ENCODE measurements at regions of chr12 and their contacts with region 1.

Region 1: GRCh38 chr12:92987362-92987761 is 58.3 kb upstream of the EEA1 start:
- DNase-seq: peak; percentile 77
- H3K4me3 Mint-ChIP-seq: no peak overlapping the region
- H3K27ac Mint-ChIP-seq: no peak overlapping the region
- H3K4me1 Mint-ChIP-seq: peaks cover 5% of the 10 kb centered on the region
- H3K27me3 Mint-ChIP-seq: no peaks in the 10 kb centered on the region
- CTCF ChIP-seq: peak; percentile 61

Region 2: DNA sequence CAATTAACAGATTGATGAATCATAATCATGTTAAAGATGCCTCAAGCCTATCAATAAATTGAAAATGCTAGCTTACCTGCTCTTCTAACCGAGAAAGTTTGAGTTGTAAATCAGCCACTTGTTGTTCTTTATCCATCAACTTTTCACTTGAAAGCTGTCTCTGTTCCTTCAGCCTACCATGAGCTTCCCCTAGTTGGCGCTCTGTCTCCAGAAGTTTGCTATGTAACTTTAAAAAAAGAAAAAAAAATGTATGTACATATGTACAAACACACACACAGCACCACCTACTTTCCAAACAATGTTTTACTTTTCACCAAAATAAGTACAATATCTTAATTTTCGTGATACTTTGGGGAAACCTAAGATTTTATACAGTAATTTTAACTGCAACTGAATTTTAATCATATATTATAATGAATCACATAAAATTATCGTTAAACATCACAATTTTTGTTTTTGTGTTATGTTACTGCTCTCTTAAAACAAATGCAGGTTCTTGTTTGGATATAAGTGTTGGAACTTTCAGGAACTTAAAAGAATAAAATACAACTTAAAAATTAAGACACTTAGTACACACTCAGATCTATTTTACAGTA is 159.4 kb before region 1 on chr12:
- CTCF ChIA-PET with region 1: interaction called, 16 read pairs
- POLR2A ChIA-PET with region 1: interaction called, 3 read pairs
- intact Hi-C with region 1: loop called (anchors 5 kb)
- DNase-seq: peak; percentile 69
- H3K4me3 Mint-ChIP-seq: no peak overlapping the region
- H3K27ac Mint-ChIP-seq: no peak overlapping the region
- H3K4me1 Mint-ChIP-seq: no peaks in the 10 kb centered on the region
- H3K27me3 Mint-ChIP-seq: no peaks in the 10 kb centered on the region
- CTCF ChIP-seq: peak; percentile 78

Region 3: GRCh38 chr12:92844151-92844763 is 143.1 kb before region 1 on chr12:
- CTCF ChIA-PET with region 1: no interaction called
- POLR2A ChIA-PET with region 1: no interaction called
- intact Hi-C with region 1: no loop called
- DNase-seq: no peak
- H3K4me3 Mint-ChIP-seq: no peak overlapping the region
- H3K27ac Mint-ChIP-seq: no peak overlapping the region
- H3K4me1 Mint-ChIP-seq: no peaks in the 10 kb centered on the region
- H3K27me3 Mint-ChIP-seq: no peaks in the 10 kb centered on the region
- CTCF ChIP-seq: no peak

Region 4: GRCh38 chr12:93002293-93003054 is 15.1 kb after region 1 on chr12:
- CTCF ChIA-PET with region 1: interaction called, 32 read pairs
- POLR2A ChIA-PET with region 1: interaction called, 4 read pairs
- intact Hi-C with region 1: no loop called
- DNase-seq: peak; percentile 52
- H3K4me3 Mint-ChIP-seq: no peak overlapping the region
- H3K27ac Mint-ChIP-seq: no peak overlapping the region
- H3K4me1 Mint-ChIP-seq: peaks cover 6% of the 10 kb centered on the region
- H3K27me3 Mint-ChIP-seq: no peaks in the 10 kb centered on the region
- CTCF ChIP-seq: no peak

Region 5: GRCh38 chr12:93127582-93128331 is 140.4 kb after region 1 on chr12:
- CTCF ChIA-PET with region 1: interaction called, 15 read pairs
- POLR2A ChIA-PET with region 1: interaction called, 12 read pairs
- intact Hi-C with region 1: loop called (anchors 1 kb)
- DNase-seq: peak; percentile 96
- H3K4me3 Mint-ChIP-seq: peak overlapping the region; percentile 49
- H3K27ac Mint-ChIP-seq: peak overlapping the region; percentile 81
- H3K4me1 Mint-ChIP-seq: peaks cover 33% of the 10 kb centered on the region
- H3K27me3 Mint-ChIP-seq: no peaks in the 10 kb centered on the region
- CTCF ChIP-seq: peak; percentile 33

Region 6: GRCh38 chr12:93397412-93397811 is 410.1 kb after region 1 on chr12:
- CTCF ChIA-PET with region 1: interaction called, 50 read pairs
- POLR2A ChIA-PET with region 1: interaction called, 5 read pairs
- intact Hi-C with region 1: loop called (anchors 2 kb)
- DNase-seq: no peak
- H3K4me3 Mint-ChIP-seq: no peak overlapping the region
- H3K27ac Mint-ChIP-seq: no peak overlapping the region
- H3K4me1 Mint-ChIP-seq: no peaks in the 10 kb centered on the region
- H3K27me3 Mint-ChIP-seq: no peaks in the 10 kb centered on the region
- CTCF ChIP-seq: no peak

Region 7: GRCh38 chr12:93742110-93742934 is 755.0 kb after region 1 on chr12:
- CTCF ChIA-PET with region 1: no interaction called
- POLR2A ChIA-PET with region 1: no interaction called
- intact Hi-C with region 1: loop called (anchors 5 kb)
- DNase-seq: peak; percentile 78
- H3K4me3 Mint-ChIP-seq: peak overlapping the region; percentile 79
- H3K27ac Mint-ChIP-seq: peak overlapping the region; percentile 95
- H3K4me1 Mint-ChIP-seq: peaks cover 38% of the 10 kb centered on the region
- H3K27me3 Mint-ChIP-seq: no peaks in the 10 kb centered on the region
- CTCF ChIP-seq: peak; percentile 38

Region 8: DNA sequence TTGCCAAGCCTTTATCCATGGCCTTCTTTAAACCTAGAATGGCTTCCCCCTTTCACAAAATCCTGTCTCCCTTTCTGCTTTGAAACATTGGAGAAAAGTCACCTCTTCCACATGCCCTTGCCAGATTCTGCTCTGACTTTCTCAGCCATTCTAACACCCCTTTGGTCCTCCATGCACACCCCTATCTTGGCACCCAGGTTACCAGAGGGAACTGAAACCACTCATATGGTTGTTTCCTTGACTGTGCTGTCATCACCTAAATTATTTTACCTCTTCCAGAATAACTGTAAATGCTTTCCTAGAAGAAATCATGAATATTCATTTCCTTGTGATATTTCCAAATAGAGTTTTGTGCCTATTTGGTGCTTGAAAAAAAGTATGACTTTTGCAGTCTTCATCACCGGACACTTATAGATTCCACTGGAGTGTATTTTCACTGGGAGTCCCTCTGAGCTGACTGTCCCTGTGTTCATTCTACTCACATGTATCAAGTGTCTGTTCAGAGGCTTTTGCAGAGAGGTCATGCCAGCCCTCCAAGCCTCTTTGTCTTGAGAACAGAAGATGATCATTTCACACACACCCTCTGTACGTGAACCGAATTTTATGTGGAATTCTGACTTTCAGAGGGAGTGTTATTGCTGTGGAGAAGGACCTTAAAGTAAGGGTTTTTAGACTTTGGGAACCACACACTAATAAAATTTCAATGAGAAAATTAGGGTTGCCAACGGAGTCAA is 1235.2 kb after region 1 on chr12:
- CTCF ChIA-PET with region 1: no interaction called
- POLR2A ChIA-PET with region 1: no interaction called
- intact Hi-C with region 1: no loop called
- DNase-seq: no peak
- H3K4me3 Mint-ChIP-seq: no peak overlapping the region
- H3K27ac Mint-ChIP-seq: no peak overlapping the region
- H3K4me1 Mint-ChIP-seq: no peaks in the 10 kb centered on the region
- H3K27me3 Mint-ChIP-seq: peaks cover 23% of the 10 kb centered on the region
- CTCF ChIP-seq: no peak

Measured in MCF 10A (cell line).